Heart left ventricle (tissue), 16 donors: ENCODE measurements at regions of chr10 and their contacts with region 1.

Region 1: GRCh38 chr10:85510682-85511081 is 855.9 kb downstream of the GRID1 start:
- DNase-seq: no peak
- ATAC-seq: peak in 1 of 4 donors; percentile 34
- H3K4me3 ChIP-seq: no peak overlapping the region
- H3K27ac ChIP-seq: no peak overlapping the region
- H3K4me1 ChIP-seq: no peaks in the 10 kb centered on the region
- H3K27me3 ChIP-seq: no peaks in the 10 kb centered on the region
- CTCF ChIP-seq: peak in 8 of 12 donors; percentile 11 to 36 (median 30)
- POLR2A ChIP-seq: no peak

Region 2: GRCh38 chr10:84613336-84614021 is 897.2 kb before region 1 on chr10:
- intact Hi-C with region 1: loop called in 1 of 10 experiments (anchors 10 kb)
- DNase-seq: peak in 2 of 5 donors; percentile 18 to 36
- ATAC-seq: peak; percentile 71 to 90 (median 88)
- H3K4me3 ChIP-seq: no peak overlapping the region
- H3K27ac ChIP-seq: no peak overlapping the region
- H3K4me1 ChIP-seq: peaks cover 0 to 5% (median 0%) of the 10 kb centered on the region in 12 donors
- H3K27me3 ChIP-seq: peaks cover 0 to 9% (median 0%) of the 10 kb centered on the region in 9 donors
- CTCF ChIP-seq: peak in 10 of 12 donors; percentile 23 to 59 (median 42)
- POLR2A ChIP-seq: no peak

Region 3: DNA sequence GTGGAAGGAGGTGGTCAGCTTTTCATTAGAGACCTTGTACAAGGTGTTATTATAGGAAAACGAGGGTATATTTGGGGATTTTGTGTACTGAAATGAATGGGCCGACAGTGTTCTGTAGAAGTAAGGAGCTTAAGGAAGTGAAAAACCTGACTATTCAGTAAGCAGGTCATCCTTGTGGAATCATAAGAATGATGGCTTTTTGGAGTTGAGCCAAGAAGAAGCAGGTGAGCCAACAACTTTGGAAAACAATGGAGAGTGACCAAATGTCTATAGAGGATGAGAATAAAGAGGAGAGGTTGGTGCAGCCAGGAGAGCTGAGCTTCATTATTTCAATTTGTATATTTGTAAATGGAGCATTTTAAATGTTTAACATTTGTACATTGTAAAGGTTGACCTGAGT is 586.6 kb before region 1 on chr10:
- intact Hi-C with region 1: loop called in 2 of 10 experiments (anchors 5 kb)
- DNase-seq: no peak
- ATAC-seq: no peak
- H3K4me3 ChIP-seq: no peak overlapping the region
- H3K27ac ChIP-seq: no peak overlapping the region
- H3K4me1 ChIP-seq: no peaks in the 10 kb centered on the region
- H3K27me3 ChIP-seq: no peaks in the 10 kb centered on the region
- CTCF ChIP-seq: no peak
- POLR2A ChIP-seq: no peak

Region 4: DNA sequence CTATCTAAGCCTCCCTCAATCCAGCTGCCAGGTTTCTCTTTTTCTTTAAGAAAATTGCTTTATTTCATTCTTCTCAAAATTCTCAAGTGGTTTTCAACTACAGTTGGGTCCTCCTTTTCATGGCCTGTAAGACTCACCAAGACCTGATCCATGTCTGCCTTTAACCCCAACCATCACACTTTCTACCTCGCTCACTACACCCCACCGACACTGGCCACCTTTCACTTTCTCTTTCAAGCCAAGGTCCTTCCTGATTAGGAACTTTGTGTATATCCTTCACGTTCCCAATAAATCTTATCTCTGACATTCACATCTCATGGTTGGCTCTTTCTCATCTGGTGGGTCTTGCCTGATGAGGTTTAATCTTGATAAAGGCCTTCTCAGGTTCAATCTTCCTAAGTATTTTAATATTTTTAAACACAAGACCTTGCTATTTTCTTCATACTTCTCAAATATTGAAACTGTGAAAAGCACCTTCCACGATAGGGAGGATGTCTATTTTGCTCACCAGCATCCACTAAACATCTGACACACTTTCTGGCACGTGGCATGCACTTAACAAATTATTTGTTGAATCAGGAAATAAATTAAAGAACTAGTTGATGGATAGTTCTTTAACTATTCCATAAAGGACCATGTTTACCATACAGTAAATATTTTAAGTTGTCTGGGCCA is 231.1 kb after region 1 on chr10:
- intact Hi-C with region 1: no loop called
- DNase-seq: no peak
- ATAC-seq: no peak
- H3K4me3 ChIP-seq: no peak overlapping the region
- H3K27ac ChIP-seq: no peak overlapping the region
- H3K4me1 ChIP-seq: no peaks in the 10 kb centered on the region
- H3K27me3 ChIP-seq: no peaks in the 10 kb centered on the region
- CTCF ChIP-seq: no peak
- POLR2A ChIP-seq: no peak